RWPE1 (cell line): ENCODE measurements at regions of chr5 and their contacts with region 1.

Region 1: GRCh38 chr5:172714491-172715421 is 56.2 kb downstream of the DUSP1 start:
- DNase-seq: peak; percentile 89
- H3K27ac ChIP-seq: peak overlapping the region; percentile 74
- CTCF ChIP-seq: peak; percentile 92

Region 2: GRCh38 chr5:172646716-172647285 is 68.0 kb before region 1 on chr5:
- CTCF ChIA-PET with region 1: no interaction called
- POLR2A ChIA-PET with region 1: no interaction called
- DNase-seq: no peak
- H3K27ac ChIP-seq: peak overlapping the region; percentile 71
- CTCF ChIP-seq: no peak

Region 3: DNA sequence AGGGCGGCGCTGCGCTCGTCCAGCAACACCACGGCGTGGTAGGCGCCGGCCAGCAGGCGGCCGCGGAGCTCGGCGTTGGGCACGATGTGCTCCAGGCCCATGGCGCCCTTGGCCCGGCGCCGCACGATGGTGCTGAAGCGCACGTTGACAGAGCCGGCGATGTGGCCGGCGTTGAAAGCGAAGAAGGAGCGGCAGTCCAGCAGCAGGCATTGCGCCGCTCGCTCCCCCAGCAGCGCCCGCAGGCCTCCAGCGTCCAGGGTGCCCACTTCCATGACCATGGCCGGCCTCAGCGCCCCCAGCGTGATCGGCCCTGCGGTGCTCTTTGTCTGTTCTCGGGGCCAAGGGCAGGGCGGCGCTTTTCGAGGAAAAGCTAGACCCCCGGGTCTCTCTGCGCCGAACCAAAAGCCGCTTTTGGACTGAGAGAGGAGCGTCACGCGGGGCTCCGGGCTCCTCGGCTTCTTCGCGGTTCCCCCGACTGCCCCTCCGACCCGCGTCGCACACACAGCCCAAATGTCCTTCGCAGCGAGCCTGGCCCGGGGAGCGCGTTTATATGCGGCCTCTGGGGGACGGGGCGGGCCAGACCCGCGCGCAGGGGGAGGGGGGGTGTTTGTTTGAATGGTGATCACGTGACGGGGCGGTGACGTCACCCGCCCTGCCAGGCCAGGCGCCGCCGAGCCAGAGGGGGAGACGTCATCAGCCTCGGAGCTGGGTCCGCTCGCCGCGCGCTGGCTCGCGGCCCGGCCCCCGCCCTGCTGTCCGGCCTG is 56.1 kb after region 1 on chr5 and contains the start of gene DUSP1:
- CTCF ChIA-PET with region 1: interaction called, 21 read pairs
- POLR2A ChIA-PET with region 1: interaction called, 3 read pairs
- DNase-seq: peak; percentile 100
- H3K27ac ChIP-seq: peak within 1 kb of the TSS; percentile 100
- CTCF ChIP-seq: no peak; the same call in 1 of the 2 replicates

Region 4: DNA sequence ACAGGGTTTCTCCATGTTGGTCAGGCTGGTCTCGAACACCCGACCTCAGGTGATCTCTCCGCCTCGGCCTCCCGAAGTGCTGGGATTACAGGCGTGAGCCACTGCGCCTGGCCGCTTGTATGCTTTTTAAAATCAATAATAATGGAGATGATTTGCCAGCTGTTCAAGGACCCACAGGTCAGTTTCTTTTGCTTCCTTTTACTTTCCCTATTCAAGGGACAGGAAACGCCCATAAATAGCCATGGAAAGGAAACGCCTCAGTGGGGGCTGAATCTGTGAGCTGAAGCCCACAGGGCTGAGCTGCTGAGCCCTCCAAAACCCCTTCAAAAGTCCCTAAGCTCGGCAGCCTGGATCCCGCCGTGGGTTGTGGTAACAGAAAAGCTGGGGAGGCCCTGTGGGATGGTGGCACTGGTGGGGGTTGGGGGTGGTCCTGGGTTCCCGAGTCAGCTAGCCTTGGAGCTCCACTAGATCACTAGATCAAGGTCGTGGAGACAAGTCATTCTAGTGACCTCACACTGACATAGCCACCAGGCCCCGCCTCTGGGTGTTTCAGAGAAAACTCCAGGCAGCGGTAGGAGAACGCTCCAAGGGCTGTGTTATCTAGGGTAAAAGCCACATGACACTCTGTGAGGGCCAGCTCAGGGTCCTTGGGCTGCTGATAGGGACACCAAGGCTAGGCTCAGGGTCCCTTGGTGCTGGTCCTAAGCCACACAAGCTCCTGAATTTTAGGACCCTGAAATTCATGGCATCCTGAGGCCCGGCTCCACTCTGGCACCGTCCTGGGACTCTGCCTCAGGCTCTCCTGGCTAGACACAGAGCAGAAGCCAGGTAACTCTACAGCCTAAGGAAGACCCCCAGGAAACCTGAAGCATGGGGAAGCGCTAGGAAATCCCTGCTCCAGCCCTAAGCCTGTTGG is 74.3 kb after region 1 on chr5:
- CTCF ChIA-PET with region 1: no interaction called
- POLR2A ChIA-PET with region 1: no interaction called
- DNase-seq: no peak
- H3K27ac ChIP-seq: peak overlapping the region; percentile 50
- CTCF ChIP-seq: no peak

Region 5: DNA sequence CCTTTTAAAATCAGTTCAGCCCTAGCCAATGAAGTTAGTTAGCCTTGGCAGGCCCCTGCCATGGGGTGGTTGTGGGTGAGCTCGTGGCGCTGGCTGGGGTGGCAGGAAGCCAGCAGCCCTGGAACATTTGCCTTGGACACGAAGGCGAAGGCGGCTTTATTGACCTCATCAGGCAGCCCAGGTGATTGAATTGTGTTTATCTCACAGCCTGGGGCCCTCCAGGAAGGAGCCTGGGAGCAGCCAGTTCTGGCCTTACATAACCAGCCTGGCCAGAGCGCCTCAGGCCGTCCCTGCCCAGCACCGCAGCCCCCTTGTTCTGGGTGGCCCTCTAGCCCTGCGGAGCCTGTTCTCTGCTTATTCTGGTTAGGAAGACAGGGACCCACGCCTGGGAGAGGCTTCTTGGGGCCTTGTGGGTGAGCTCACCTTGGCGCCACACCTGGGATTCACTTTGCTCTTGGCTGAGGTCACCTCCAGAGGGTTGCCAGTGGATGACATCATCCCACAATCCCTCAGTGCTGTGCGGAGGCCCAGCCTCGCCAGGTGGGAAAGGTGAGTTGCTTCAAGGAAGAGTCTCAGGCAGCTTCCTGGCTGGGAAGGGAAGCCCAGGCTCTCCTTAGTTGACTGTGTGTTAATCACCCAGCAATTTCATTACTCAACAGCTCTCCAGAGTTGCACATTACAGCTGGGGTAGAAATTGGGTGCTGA is 190.0 kb after region 1 on chr5:
- CTCF ChIA-PET with region 1: interaction called, 11 read pairs
- POLR2A ChIA-PET with region 1: no interaction called
- DNase-seq: peak; percentile 97
- H3K27ac ChIP-seq: peak overlapping the region; percentile 100
- CTCF ChIP-seq: no peak

Region 6: GRCh38 chr5:172932313-172933017 is 217.7 kb after region 1 on chr5:
- CTCF ChIA-PET with region 1: interaction called, 138 read pairs
- POLR2A ChIA-PET with region 1: interaction called, 3 read pairs
- DNase-seq: peak; percentile 85
- H3K27ac ChIP-seq: peak overlapping the region; percentile 79
- CTCF ChIP-seq: peak; percentile 99

Region 7: DNA sequence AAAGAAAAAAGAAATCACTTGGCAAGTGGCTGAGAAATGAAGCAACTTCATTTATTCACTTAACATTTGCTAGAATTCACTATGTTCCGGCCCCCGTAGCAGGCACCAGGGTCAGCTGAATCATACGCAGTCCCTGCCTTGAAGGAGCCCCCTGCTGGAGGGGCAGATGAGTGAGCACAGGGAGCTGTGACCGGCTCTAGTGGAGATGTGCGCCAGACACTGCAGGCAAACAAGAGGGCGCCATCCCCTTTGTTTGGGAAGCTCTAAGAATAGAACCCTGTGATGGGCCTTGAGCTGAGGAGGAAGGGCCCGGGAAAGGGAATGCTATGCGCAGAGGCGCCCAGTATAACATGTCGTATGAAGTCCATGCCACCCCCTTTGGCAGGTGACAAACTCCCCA is 224.3 kb after region 1 on chr5:
- CTCF ChIA-PET with region 1: interaction called, 138 read pairs
- POLR2A ChIA-PET with region 1: interaction called, 3 read pairs
- DNase-seq: no peak
- H3K27ac ChIP-seq: 0 out of 2 replicates have a peak overlapping the region, but pooled peaks have one; percentile 2
- CTCF ChIP-seq: no peak; the same call in 1 of the 2 replicates

Region 8: DNA sequence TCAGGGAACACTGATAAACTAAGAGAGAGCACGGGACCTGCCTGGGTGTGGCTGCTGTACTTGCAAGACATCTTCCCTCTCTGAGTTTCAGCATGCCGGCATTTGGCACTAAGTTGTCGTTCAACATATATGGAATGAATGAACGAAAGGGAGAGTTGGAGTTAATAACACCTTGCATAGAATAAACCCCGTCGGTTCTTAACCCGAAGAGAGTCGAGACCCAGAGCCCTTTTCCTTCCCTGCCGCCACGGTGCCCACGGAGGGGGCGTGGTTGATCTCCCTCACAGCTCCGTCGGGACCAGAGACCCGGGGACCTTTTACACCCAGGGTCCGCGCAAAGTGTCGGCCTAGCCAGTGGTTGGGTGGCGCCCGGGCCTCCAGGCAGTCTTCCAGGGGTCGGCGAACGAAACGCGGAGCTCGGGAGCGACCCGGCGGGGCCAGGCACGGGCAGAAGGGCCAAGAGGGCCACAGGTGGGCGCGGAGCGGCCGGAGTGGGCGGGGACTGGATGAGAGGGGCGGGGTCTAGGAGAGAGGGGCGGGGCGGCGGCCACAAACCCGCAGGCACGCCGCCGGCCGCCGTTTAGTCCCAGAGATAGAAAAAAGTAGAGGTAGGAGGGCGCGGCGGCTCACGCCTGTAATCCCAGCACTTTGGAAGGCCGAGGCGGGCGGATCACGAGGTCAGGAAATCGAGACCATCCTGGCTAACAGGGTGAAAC is 243.7 kb after region 1 on chr5:
- CTCF ChIA-PET with region 1: interaction called, 13 read pairs
- POLR2A ChIA-PET with region 1: no interaction called
- DNase-seq: peak; percentile 95
- H3K27ac ChIP-seq: peak overlapping the region; percentile 86
- CTCF ChIP-seq: no peak